ENCODE measurements at regions of chr1 and their contacts with region 1.

Region 1: DNA sequence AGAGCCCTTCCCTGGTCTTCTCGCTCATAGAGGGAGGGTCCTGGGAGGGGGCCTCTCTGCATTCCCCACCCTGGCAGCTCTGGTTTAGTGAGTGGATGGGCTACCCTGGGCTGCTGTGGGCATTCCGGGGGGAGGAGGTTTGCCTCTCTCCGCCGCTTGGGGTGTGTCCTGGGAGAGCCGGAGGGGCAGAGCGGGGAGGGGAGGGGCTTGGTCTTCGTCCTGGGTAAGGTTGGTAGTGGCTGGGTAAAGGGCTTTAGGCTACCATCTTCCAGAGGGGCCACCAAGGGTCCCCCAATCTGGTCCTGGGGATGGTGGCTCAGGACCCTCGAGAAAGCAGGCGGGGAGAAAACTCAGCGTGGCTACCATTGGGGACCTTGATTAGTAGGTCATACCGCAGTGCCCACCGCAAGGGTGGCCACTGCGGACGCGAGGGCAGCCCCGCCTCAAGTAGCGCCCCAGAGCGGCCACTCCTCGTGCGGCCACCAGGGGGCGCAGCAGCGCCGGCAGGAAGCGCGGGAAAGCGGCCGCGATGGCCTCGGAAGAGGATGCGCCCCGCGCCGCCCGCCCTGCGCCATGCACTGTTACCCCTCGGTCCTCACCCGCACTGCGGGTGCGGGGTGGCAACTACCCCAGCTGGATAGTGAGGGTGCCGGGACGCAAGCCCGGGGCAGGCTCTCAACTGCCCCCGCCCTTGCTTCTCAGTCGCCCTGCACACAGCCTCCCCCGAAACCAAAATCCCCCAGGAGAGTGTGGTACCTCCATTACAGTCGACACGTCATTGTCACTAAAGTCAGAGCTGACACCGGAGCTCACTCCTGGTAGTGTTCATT is 44.1 kb upstream of the SLC25A33 start:
- H3K4me3 ChIP-seq: peak overlapping the region; percentile 32
- H3K27ac ChIP-seq: no peak overlapping the region
- H3K4me1 ChIP-seq: 0 out of 2 replicates have a peak, but pooled peaks cover 2% of the 10 kb centered on the region
- CTCF ChIP-seq: peak; percentile 95

Region 2: GRCh38 chr1:9270290-9270883 is 224.8 kb before region 1 on chr1:
- CTCF ChIA-PET with region 1: interaction called, 97 read pairs
- POLR2A ChIA-PET with region 1: interaction called, 7 read pairs
- H3K4me3 ChIP-seq: no peak overlapping the region
- H3K27ac ChIP-seq: no peak overlapping the region
- H3K4me1 ChIP-seq: peaks cover 4% of the 10 kb centered on the region
- CTCF ChIP-seq: no peak

Region 3: DNA sequence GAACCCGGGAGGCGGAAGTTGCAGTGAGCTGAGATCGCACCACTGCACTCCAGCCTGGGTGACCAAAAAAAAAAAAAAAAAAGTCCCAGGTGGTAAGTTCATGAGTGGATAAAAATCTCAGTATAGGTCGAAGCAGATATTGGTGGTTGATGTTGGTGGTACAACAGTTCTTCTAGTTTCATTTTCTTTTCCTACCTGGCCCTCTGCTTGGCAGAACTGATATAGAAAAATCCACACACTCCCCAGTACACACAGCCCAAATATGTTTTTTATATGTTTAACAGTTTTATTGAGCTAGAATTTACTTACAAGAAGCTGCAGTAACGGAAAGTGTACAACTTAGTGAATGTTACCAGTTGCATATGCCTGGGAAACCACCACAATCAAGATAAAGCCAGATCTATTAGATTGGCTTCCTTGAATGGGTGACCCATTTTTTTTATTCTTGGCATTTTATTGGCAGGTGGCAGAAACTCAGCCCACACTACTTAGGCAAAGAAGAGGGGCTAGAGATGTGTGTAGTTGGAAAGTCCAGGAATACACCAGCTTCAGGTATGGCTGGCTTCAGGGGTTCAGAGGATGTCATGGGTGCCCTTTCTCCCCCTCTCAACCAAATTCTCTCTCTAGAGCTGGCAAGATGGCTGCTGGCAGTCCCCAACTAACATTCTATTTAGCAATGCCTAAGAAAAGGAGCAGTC is 74.2 kb before region 1 on chr1:
- CTCF ChIA-PET with region 1: no interaction called
- POLR2A ChIA-PET with region 1: no interaction called
- H3K4me3 ChIP-seq: no peak overlapping the region
- H3K27ac ChIP-seq: no peak overlapping the region
- H3K4me1 ChIP-seq: no peaks in the 10 kb centered on the region
- CTCF ChIP-seq: no peak

Region 4: GRCh38 chr1:9455487-9456234 is 39.5 kb before region 1 on chr1:
- CTCF ChIA-PET with region 1: interaction called, 12 read pairs
- POLR2A ChIA-PET with region 1: no interaction called
- H3K4me3 ChIP-seq: no peak overlapping the region
- H3K27ac ChIP-seq: no peak overlapping the region
- H3K4me1 ChIP-seq: no peaks in the 10 kb centered on the region
- CTCF ChIP-seq: peak; percentile 44; the same call in 1 of the 2 replicates

Region 5: GRCh38 chr1:9573723-9574122 is 78.6 kb after region 1 on chr1:
- CTCF ChIA-PET with region 1: interaction called, 49 read pairs
- POLR2A ChIA-PET with region 1: no interaction called
- H3K4me3 ChIP-seq: no peak overlapping the region
- H3K27ac ChIP-seq: no peak overlapping the region
- H3K4me1 ChIP-seq: no peaks in the 10 kb centered on the region
- CTCF ChIP-seq: peak; percentile 71

Measured in HEK293 (cell line).